A549 (cell line): ENCODE measurements at regions of chr5 and their contacts with region 1.

Region 1: DNA sequence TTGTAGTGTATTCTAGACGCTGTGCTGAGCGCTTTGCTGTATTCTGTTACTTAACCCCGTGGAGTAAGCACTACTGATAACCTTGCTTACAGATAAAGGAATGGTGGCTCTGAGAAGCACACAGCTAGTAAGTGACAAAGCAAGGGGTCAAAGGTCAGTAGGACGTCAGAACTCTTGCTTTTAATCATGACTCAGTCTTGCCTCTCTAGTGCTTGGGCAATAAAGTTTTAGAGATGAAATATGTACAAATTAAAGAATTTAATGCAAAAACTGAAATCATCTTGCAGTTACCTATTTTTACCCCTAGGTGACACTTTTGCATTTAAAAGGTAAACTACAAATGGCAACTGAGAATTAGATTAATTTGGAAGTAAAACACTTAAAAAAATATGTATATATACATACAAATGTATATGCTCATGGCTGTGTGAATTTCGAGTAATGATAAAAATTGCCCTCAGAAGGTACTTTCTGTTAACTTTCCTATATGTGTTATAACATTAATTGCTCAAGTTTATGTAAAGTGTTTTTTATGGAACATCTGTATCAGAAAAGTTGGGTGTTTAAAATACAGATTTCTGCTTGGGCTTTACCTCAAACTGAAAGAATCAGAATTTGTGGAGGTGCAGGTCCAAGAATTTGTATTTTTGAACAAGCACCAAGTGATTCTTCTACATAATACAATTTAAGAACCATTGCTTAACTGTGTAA is 175.1 kb upstream of the DAB2 start:
- DNase-seq: peak; percentile 17 to 67
- ATAC-seq: peak; percentile 54 to 73
- H3K4me3 ChIP-seq: no peak overlapping the region
- H3K27ac ChIP-seq: no peak overlapping the region
- H3K4me1 ChIP-seq: peaks cover 11% of the 10 kb centered on the region; the same call in 2 of the 3 replicates
- CTCF ChIP-seq: peak; percentile 72
- EP300 ChIP-seq: no peak
- POLR2A ChIP-seq: no peak
- RAD21 ChIP-seq: peak; percentile 75 to 77

Region 2: DNA sequence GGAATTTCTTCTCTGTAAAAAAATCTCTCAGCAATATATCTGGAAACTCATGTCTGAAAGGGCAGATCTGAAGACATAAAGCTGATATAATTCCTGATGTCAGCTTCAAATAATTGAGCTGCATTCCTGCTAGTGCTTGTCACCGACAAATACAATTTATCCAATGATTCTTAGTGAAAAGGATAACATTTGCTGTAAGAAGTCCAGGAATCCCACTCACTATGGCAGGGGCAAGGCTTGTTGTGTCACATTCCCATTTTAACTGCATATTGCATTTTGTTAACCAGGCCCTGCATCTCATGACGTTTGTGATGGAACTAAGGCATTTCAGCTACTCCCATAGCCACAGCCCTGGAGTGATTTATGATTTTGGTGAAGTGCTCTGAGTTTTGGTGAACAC is 14.9 kb before region 1 on chr5:
- CTCF ChIA-PET with region 1: interaction called, 13 read pairs
- POLR2A ChIA-PET with region 1: no interaction called
- DNase-seq: no peak
- ATAC-seq: no peak
- H3K4me3 ChIP-seq: no peak overlapping the region
- H3K27ac ChIP-seq: no peak overlapping the region
- H3K4me1 ChIP-seq: no peaks in the 10 kb centered on the region
- CTCF ChIP-seq: no peak
- EP300 ChIP-seq: no peak
- POLR2A ChIP-seq: no peak
- RAD21 ChIP-seq: no peak